Naive thymus-derived CD8-positive, alpha-beta T cell (primary cell): ENCODE measurements at regions of chr14 and their contacts with region 1.

Region 1: DNA sequence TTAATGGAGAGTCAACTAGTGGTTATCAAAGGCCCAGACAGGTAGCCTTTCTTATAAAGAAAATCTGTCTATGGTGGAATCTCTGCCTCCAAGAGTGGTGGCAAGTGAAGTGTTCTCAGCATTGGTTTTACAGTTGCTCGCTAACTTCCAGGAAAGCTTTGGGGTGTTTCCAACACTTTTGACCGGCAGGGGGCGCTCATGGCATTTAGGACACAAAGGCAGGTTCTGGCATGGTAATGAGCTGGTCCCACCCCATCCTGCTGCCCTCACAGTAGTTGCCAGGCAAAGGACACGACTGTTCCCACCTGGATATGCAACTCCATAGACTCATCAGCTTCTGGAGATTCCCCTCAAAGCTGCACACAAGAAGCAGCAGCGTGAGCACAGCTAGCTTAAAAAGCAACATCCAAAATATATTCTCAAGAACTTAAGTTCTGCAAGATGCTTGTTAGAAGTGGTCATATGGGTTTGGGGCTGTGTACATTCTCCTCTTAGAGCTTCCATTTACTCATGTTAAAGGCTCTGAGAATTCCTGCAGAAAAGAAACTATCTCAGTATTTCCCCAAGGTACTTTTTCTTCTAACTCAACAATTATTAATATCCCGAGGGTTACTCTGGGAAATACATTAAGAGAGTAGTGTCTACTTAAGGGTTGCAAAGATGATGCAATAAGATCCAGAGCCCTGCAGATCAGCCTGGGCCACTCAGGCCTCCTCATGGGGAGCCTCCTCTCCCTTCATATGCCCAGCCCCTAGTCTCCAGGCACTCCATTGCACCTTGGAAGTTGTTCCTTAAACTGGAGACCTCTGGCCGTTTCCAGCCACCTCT is 14.8 kb downstream of the PROX2 start:
- DNase-seq: peak; percentile 76 to 95 (median 88)
- ATAC-seq: peak; percentile 87 to 94
- H3K4me3 Mint-ChIP-seq: no peak overlapping the region
- H3K27ac Mint-ChIP-seq: peak overlapping the region in 2 of 10 donors; percentile 19 to 40
- H3K4me1 Mint-ChIP-seq: peaks cover 3 to 18% (median 12%) of the 10 kb centered on the region in 4 donors
- H3K27me3 Mint-ChIP-seq: no peaks in the 10 kb centered on the region

Region 2: GRCh38 chr14:74875941-74876913 is 15.1 kb after region 1 on chr14 and contains the start of gene PROX2:
- POLR2A ChIA-PET with region 1: interaction called, 60 read pairs
- DNase-seq: peak in 7 of 10 donors; percentile 14 to 37 (median 22)
- ATAC-seq: peak; percentile 72 to 87
- H3K4me3 Mint-ChIP-seq: peak within 1 kb of the TSS; percentile 62 to 79 (median 72)
- H3K27ac Mint-ChIP-seq: peak within 1 kb of the TSS; percentile 59 to 95 (median 82)
- H3K4me1 Mint-ChIP-seq: peaks cover 25 to 60% (median 42%) of the 10 kb centered on the region in 4 donors
- H3K27me3 Mint-ChIP-seq: no peaks in the 10 kb centered on the region
- polyA plus RNA-seq, gene PROX2: 0.12 to 0.50 (median 0.22) TPM

Region 3: GRCh38 chr14:74881431-74882361 is 20.6 kb after region 1 on chr14 and contains the start of gene DLST:
- POLR2A ChIA-PET with region 1: interaction called, 60 read pairs
- DNase-seq: peak; percentile 69 to 89 (median 84)
- ATAC-seq: peak; percentile 78 to 81
- H3K4me3 Mint-ChIP-seq: peak within 1 kb of the TSS; percentile 96 to 100 (median 99)
- H3K27ac Mint-ChIP-seq: peak within 1 kb of the TSS; percentile 93 to 100 (median 99)
- H3K4me1 Mint-ChIP-seq: peaks cover 46 to 79% (median 66%) of the 10 kb centered on the region in 4 donors
- H3K27me3 Mint-ChIP-seq: no peaks in the 10 kb centered on the region
- polyA plus RNA-seq, gene DLST: 8.8 to 9.3 (median 8.9) TPM

Region 4: DNA sequence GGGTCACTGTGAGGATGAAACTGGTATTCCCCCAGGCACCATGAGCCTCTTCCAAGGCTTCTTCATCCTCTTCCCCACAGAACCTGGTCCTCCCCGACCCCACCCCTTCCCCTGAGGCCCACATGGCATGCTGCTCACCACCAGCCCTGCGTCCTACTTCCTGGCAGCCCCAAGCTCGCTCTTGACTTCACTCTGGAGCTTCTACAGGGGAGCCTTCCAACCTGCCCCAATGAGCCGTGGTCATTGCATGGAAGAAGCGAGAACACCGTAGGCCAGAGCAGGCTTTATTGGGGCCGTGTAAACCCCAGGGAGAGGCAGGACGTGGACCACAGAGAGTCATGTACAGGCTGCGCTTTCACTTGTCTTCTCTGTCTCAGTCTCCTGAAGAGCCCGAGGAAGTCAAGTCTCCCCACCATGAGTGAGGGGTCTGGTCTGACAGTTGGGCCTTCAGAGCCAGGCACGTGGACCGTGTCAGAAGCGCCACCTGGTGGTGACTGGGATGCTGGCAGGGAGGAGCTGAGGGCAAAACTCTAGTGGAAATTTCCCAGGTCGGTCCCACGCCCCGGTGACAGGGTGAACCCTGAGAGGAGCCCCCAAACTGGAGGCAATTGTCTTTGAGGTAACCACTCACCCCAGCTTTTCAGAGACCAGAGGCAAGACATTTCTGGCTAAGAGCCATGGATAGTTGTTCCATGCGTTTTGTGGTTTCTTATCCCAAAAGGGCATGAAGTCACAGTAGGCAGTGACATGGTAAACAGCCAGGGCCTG is 44.4 kb after region 1 on chr14:
- POLR2A ChIA-PET with region 1: interaction called, 59 read pairs
- DNase-seq: peak; percentile 58 to 88 (median 77)
- ATAC-seq: peak; percentile 76 to 81
- H3K4me3 Mint-ChIP-seq: no peak overlapping the region
- H3K27ac Mint-ChIP-seq: peak overlapping the region in 9 of 10 donors; percentile 8 to 87 (median 72)
- H3K4me1 Mint-ChIP-seq: peaks cover 0 to 22% (median 10%) of the 10 kb centered on the region in 4 donors
- H3K27me3 Mint-ChIP-seq: no peaks in the 10 kb centered on the region

Region 5: GRCh38 chr14:75050852-75051554 is 189.9 kb after region 1 on chr14 and contains the start of gene MLH3:
- POLR2A ChIA-PET with region 1: no interaction called
- DNase-seq: peak; percentile 68 to 89 (median 78)
- ATAC-seq: peak; percentile 88 to 90
- H3K4me3 Mint-ChIP-seq: peak within 1 kb of the TSS; percentile 89 to 97 (median 94)
- H3K27ac Mint-ChIP-seq: peak within 1 kb of the TSS; percentile 91 to 99 (median 97)
- H3K4me1 Mint-ChIP-seq: peaks cover 10 to 44% (median 35%) of the 10 kb centered on the region in 4 donors
- H3K27me3 Mint-ChIP-seq: peaks cover 0 to 3% (median 0%) of the 10 kb centered on the region in 5 donors
- polyA plus RNA-seq, gene MLH3: 9.3 to 11.9 (median 10.8) TPM